A549 (cell line): ENCODE measurements at regions of chr2 and their contacts with region 1.

Region 1: GRCh38 chr2:164560181-164560792 is 61.0 kb downstream of the GRB14 start:
- DNase-seq: peak in 1 of 2 experiments; percentile 25
- ATAC-seq: peak in 1 of 2 experiments; percentile 44; a peak in 3 of 6 replicates
- H3K4me3 ChIP-seq: no peak overlapping the region
- H3K27ac ChIP-seq: no peak overlapping the region; a peak in 1 of 6 replicates
- H3K4me1 ChIP-seq: peaks cover 30% of the 10 kb centered on the region
- CTCF ChIP-seq: peak; percentile 90
- EP300 ChIP-seq: no peak
- POLR2A ChIP-seq: no peak
- RAD21 ChIP-seq: peak; percentile 69 to 81

Region 2: DNA sequence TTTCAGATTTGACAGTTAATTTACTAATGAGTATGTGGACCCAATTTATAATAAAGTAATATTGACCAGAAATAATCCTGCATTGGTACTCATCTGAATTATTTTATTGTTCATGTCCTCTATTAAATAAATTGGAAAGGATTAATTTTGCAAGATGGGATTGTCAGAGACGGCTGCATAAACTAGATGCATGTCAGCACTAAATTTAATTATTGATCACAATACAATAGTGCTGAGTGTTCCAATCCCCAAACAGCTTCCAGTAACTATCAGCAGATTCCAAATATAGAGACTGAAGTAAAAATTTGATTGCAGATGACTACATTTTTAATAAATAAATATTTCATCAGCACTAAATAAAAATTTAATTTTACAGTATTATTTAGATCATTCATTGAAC is 326.2 kb before region 1 on chr2:
- CTCF ChIA-PET with region 1: no interaction called
- POLR2A ChIA-PET with region 1: no interaction called
- DNase-seq: no peak
- ATAC-seq: no peak
- H3K4me3 ChIP-seq: no peak overlapping the region
- H3K27ac ChIP-seq: no peak overlapping the region
- H3K4me1 ChIP-seq: no peaks in the 10 kb centered on the region
- CTCF ChIP-seq: no peak
- EP300 ChIP-seq: no peak
- POLR2A ChIP-seq: no peak
- RAD21 ChIP-seq: no peak

Region 3: DNA sequence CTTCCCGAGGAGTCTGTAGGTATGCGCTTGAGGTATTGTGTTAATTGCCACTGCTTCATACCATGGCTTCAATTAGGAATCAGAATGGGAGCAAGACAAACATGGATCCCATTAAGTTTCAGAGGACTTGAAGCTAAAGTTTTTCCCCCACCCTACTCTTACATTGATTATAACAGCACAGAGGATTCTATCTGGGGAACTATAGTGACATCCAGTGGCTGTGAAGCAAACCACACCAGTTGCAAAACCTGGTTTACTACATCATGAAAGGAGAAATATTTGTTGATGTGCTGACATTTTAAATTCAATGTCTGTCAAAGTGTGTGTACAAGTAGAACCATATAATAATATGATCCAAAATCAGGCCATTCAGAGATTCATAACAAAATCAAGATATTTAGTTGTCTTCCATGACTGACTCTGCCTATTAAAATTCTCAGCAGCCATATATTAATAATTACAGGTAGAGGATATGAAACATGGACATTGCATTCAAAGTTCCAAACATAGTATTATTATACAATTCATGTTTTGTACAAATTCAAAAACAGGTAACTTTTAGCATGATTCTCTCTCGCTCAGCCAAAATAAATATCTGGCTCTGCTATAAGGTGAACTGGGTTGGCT is 21.9 kb before region 1 on chr2:
- CTCF ChIA-PET with region 1: interaction called, 12 read pairs
- POLR2A ChIA-PET with region 1: no interaction called
- DNase-seq: peak; percentile 52 to 55
- ATAC-seq: peak; percentile 86 to 93; a peak in 5 of 6 replicates
- H3K4me3 ChIP-seq: no peak overlapping the region
- H3K27ac ChIP-seq: no peak overlapping the region
- H3K4me1 ChIP-seq: peaks cover 20% of the 10 kb centered on the region
- CTCF ChIP-seq: peak; percentile 78
- EP300 ChIP-seq: no peak
- POLR2A ChIP-seq: no peak
- RAD21 ChIP-seq: peak; percentile 72 to 79

Region 4: GRCh38 chr2:164570475-164570874 is 10.2 kb after region 1 on chr2:
- CTCF ChIA-PET with region 1: interaction called, 17 read pairs
- POLR2A ChIA-PET with region 1: no interaction called
- DNase-seq: no peak
- ATAC-seq: peak in 1 of 2 experiments; percentile 23; a peak in 1 of 6 replicates
- H3K4me3 ChIP-seq: no peak overlapping the region
- H3K27ac ChIP-seq: no peak overlapping the region
- H3K4me1 ChIP-seq: peaks cover 51% of the 10 kb centered on the region
- CTCF ChIP-seq: no peak
- EP300 ChIP-seq: no peak
- POLR2A ChIP-seq: no peak
- RAD21 ChIP-seq: no peak

Region 5: GRCh38 chr2:164599966-164600589 is 39.8 kb after region 1 on chr2:
- CTCF ChIA-PET with region 1: interaction called, 13 read pairs
- POLR2A ChIA-PET with region 1: no interaction called
- DNase-seq: peak; percentile 53 to 87
- ATAC-seq: peak; percentile 96 to 100
- H3K4me3 ChIP-seq: no peak overlapping the region
- H3K27ac ChIP-seq: no peak overlapping the region
- H3K4me1 ChIP-seq: peaks cover 9% of the 10 kb centered on the region; the same call in 2 of the 3 replicates
- CTCF ChIP-seq: peak; percentile 98
- EP300 ChIP-seq: no peak
- POLR2A ChIP-seq: no peak
- RAD21 ChIP-seq: peak; percentile 77 to 80

Region 6: GRCh38 chr2:164717000-164717803 is 156.9 kb after region 1 on chr2:
- CTCF ChIA-PET with region 1: interaction called, 25 read pairs
- POLR2A ChIA-PET with region 1: no interaction called
- DNase-seq: peak in 1 of 2 experiments; percentile 54
- ATAC-seq: no peak
- H3K4me3 ChIP-seq: no peak overlapping the region
- H3K27ac ChIP-seq: peak overlapping the region; percentile 51 to 98
- H3K4me1 ChIP-seq: peaks cover 53% of the 10 kb centered on the region
- CTCF ChIP-seq: peak; percentile 85
- EP300 ChIP-seq: no peak
- POLR2A ChIP-seq: no peak
- RAD21 ChIP-seq: peak; percentile 85 to 93